ENCODE measurements at regions of chr2 and their contacts with region 1.

Region 1: DNA sequence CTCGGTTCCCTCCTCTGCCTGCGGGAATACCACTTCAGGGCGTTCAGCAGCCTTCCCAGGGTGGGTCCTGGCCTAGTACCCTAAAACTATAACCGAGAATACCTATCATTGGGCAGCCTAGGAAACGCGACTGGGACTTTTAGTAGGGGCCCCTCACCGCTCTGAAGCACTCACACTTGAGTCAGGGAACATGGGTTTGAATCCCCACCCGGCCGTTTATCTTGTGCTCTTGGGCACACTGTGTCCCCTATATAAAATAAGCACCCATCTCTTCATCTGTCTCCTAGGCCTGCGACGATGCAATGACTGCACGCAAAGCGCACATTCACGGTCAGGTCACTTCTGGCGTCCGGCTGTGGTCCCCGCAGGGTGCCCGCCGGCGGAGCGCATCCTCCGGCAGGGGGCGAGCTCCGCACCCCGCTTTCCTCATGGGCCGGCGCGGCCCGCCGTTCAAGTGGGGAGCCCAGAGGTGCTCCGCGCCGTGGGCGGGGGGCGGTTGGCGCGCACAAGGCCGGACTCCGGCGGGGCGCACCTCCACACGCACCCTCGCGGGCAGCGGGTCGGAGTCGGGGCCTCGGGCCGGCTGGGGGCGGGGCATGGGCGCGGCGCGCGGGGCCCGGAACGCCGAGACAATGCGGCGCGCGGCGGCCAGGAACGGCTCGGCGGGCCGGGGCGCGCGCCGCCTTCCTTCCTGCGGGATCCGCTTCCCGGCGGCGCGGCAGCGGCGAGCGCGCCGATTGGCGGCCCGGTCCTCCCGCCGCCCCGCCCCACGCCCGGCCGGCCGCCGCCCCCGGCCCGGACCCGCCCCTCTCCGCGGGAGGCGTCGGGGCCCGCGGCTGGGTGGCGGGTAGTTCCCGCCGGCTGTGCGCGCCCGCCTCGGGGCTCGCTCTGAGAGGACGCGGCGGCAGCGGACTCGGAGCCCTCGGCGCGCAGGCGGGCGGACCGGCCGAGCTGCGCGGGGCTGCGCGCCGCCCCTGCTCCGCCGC is at the start of gene ASAP2:
- DNase-seq: peak; percentile 67
- H3K4me3 Mint-ChIP-seq: peak within 1 kb of the TSS; percentile 81
- H3K27ac Mint-ChIP-seq: peak within 1 kb of the TSS; percentile 69
- H3K4me1 Mint-ChIP-seq: peaks cover 10% of the 10 kb centered on the region
- H3K27me3 Mint-ChIP-seq: no peaks in the 10 kb centered on the region
- CTCF ChIP-seq: peak; percentile 88
- total RNA-seq, gene ASAP2: 80.8 and 89.5 TPM in 2 replicates

Region 2: DNA sequence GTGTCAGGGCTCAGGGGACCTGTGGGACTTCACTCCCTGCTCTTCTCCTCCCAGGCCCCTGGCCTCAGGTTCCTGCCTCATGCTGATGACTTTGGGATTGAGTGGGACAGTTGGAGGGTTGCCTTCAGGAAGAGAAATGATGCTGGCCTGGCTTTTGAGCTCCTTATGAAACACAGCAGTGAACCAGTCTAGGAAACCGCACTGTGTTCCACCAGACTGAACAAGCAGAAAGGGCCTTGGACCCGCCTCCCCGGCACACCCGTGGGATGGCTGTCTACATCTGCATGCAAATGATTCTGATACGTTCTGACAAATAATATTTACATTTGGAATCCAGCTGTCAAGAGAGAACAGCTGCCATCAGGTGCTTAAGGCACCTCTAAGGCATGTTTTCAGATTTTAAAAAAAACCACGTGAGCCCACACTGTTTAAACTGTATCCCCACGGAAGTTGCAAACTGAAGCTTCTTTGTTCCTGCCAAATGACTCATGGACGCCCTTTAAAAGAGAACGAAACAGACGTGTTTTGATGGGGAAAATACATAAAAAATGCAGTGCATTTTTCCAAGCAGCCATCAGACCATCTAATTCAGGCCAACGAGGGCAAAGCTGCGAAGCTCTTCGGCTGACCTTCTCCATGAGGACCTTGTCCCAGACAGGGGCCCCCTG is 27.2 kb before region 1 on chr2:
- CTCF ChIA-PET with region 1: interaction called, 8 read pairs
- POLR2A ChIA-PET with region 1: interaction called, 12 read pairs
- intact Hi-C with region 1: no loop called
- DNase-seq: peak; percentile 64
- H3K4me3 Mint-ChIP-seq: peak overlapping the region; percentile 35
- H3K27ac Mint-ChIP-seq: peak overlapping the region; percentile 88
- H3K4me1 Mint-ChIP-seq: peaks cover 44% of the 10 kb centered on the region
- H3K27me3 Mint-ChIP-seq: no peaks in the 10 kb centered on the region
- CTCF ChIP-seq: no peak

Region 3: DNA sequence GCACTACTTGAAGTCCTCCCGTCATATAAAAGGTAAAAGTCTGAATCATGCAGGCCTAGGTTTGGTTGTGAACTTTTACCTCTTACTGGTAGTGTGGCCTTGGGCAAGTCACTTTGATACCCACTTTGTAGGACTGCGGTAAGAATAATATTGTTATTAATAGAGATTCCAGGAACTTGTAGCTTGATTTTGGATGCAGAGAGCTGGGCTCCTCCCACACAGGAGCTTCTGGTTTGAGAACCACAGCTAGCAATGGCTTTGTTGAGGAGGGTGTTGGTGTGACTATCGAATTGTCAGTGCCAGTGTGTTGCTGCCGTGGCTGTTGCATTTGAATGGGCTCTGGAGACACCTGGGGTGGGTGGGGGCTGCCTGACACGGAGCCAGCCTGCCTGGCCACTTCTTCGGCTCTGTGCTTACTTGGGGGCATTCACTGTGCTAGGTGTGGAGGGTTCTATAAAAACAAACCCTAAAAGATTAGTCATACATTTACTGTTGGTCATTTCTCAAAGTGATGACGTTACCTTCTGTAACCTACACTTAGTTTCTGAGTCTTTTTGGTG is 38.8 kb after region 1 on chr2:
- CTCF ChIA-PET with region 1: interaction called, 20 read pairs
- POLR2A ChIA-PET with region 1: interaction called, 64 read pairs
- intact Hi-C with region 1: loop called (anchors 5 kb)
- DNase-seq: peak; percentile 56
- H3K4me3 Mint-ChIP-seq: peak overlapping the region; percentile 52
- H3K27ac Mint-ChIP-seq: peak overlapping the region; percentile 93
- H3K4me1 Mint-ChIP-seq: peaks cover 62% of the 10 kb centered on the region
- H3K27me3 Mint-ChIP-seq: no peaks in the 10 kb centered on the region
- CTCF ChIP-seq: no peak

Region 4: GRCh38 chr2:9287400-9288043 is 81.3 kb after region 1 on chr2:
- CTCF ChIA-PET with region 1: interaction called, 11 read pairs
- POLR2A ChIA-PET with region 1: interaction called, 66 read pairs
- intact Hi-C with region 1: loop called (anchors 1 kb)
- DNase-seq: peak; percentile 97
- H3K4me3 Mint-ChIP-seq: peak overlapping the region; percentile 50
- H3K27ac Mint-ChIP-seq: peak overlapping the region; percentile 84
- H3K4me1 Mint-ChIP-seq: peaks cover 58% of the 10 kb centered on the region
- H3K27me3 Mint-ChIP-seq: no peaks in the 10 kb centered on the region
- CTCF ChIP-seq: no peak

Region 5: GRCh38 chr2:9333591-9334171 is 127.4 kb after region 1 on chr2:
- CTCF ChIA-PET with region 1: interaction called, 22 read pairs
- POLR2A ChIA-PET with region 1: interaction called, 9 read pairs
- intact Hi-C with region 1: loop called (anchors 1 kb)
- DNase-seq: peak; percentile 78
- H3K4me3 Mint-ChIP-seq: no peak overlapping the region
- H3K27ac Mint-ChIP-seq: peak overlapping the region; percentile 87
- H3K4me1 Mint-ChIP-seq: peaks cover 31% of the 10 kb centered on the region
- H3K27me3 Mint-ChIP-seq: no peaks in the 10 kb centered on the region
- CTCF ChIP-seq: peak; percentile 76